ENCODE measurements at regions of chr19 and their contacts with region 1.

Region 1: GRCh38 chr19:1113033-1113985 is 9.5 kb downstream of the GPX4 start:
- DNase-seq: peak; percentile 87
- H3K4me3 Mint-ChIP-seq: no peak overlapping the region
- H3K27ac Mint-ChIP-seq: no peak overlapping the region
- H3K4me1 Mint-ChIP-seq: peaks cover 3% of the 10 kb centered on the region
- H3K27me3 Mint-ChIP-seq: no peaks in the 10 kb centered on the region

Region 2: GRCh38 chr19:1131738-1132551 is 18.6 kb after region 1 on chr19:
- CTCF ChIA-PET with region 1: interaction called, 22 read pairs
- POLR2A ChIA-PET with region 1: no interaction called
- DNase-seq: peak; percentile 91
- H3K4me3 Mint-ChIP-seq: peak overlapping the region; percentile 86
- H3K27ac Mint-ChIP-seq: peak overlapping the region; percentile 92
- H3K4me1 Mint-ChIP-seq: peaks cover 42% of the 10 kb centered on the region
- H3K27me3 Mint-ChIP-seq: no peaks in the 10 kb centered on the region

Region 3: DNA sequence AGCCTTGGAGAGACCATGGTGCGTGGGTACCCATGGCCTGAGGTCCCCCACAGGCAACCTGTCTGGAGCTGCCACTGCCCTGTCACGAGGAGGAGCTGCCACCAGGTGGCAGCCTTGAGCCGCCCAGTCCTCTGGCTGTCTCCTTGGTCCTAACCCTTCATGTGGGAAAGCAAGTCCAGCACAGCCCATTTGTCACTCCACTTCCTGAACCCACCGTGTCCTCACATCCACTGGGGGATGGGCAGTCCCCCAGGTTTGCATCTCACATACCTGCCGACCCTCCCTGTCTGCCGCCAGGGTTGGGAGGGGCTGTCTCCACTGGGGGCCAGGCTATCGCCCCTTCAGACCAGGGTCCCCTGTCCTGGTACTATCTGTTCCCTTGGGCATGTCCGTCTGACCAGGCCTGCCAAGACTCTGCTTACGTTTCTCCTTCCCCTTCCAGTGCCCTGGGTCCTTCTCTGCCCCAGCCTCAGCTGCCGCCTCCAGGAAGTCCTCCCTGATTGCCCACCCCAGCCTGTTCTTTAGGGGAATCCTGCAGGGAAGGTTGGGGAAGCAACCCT is 166.6 kb after region 1 on chr19:
- CTCF ChIA-PET with region 1: no interaction called
- POLR2A ChIA-PET with region 1: no interaction called
- DNase-seq: peak; percentile 80
- H3K4me3 Mint-ChIP-seq: no peak overlapping the region
- H3K27ac Mint-ChIP-seq: peak overlapping the region; percentile 60
- H3K4me1 Mint-ChIP-seq: peaks cover 21% of the 10 kb centered on the region
- H3K27me3 Mint-ChIP-seq: peaks cover 8% of the 10 kb centered on the region